BJ (cell line): ENCODE measurements at regions of chr12 and their contacts with region 1.

Region 1: GRCh38 chr12:80763874-80764273 is 47.2 kb downstream of the MYF5 start:
- DNase-seq: no peak
- H3K4me3 ChIP-seq: no peak overlapping the region
- H3K27me3 ChIP-seq: no peaks in the 10 kb centered on the region
- CTCF ChIP-seq: peak; percentile 58

Region 2: DNA sequence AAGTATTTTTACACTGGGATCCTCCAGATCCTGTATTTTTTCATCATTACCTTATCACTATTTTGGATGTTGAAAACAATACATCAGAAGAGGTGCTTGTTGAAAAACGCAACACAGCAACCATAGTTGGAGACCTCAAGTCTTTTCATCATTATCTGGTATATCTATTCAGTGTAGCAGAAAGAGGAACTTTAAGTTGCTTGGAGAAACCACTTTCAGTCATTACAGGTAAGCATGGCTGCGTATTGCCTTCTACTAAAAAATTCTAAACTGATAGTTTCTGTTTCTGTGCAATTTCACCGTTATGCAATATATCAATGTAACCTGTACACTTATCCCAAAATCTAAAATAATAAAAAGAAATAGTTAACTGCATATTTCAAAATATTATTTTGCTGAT is 352.1 kb before region 1 on chr12:
- CTCF ChIA-PET with region 1: interaction called, 15 read pairs
- POLR2A ChIA-PET with region 1: no interaction called
- DNase-seq: no peak
- H3K4me3 ChIP-seq: no peak overlapping the region
- H3K27me3 ChIP-seq: no peaks in the 10 kb centered on the region
- CTCF ChIP-seq: no peak